ENCODE measurements at regions of chr19 and their contacts with region 1.

Region 1: DNA sequence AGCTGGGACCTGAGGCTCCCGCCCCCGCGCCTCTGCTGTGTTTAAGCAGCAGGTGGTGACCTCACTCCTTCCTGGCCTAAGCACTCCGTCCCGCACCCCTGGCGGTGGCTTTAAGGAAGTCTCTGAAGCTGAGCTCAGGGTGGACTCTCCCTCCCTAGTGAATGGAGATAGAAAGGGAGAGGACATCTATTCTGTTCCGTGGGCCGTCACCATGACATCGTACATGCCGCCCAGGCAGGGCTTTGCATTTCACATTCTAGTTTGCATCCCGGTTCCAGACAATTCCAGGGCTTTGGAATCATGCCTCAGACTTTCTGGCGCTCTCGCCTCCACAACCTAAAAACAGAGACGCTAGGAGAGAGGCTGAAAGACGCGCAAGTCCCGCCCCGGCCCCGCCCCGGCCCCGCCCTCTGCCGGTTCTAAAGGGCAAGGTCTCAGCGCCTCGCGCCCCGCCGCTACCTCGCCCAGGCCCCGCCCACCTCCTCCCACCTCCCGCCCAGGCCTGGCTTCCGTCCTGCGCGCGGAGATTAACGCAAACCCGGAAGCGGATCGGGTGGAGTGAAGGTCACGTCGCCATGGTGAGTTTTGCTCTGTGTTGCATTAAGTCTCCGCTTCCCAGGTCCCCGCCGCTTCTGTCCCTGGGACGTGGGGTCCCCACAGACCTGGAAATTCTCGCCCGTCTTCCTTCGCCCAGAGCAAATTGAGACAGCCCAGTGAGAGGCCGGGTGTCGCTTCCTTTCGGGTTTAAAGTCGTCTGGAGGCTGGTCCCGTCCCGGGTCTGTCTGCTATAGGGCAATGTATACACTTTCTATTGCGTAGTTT is at the start of gene ZNF808:
- DNase-seq: peak; percentile 87 to 99 (median 96)
- ATAC-seq: peak; percentile 93 to 97 (median 96)
- H3K4me3 ChIP-seq: peak within 1 kb of the TSS; percentile 93 to 97
- H3K4me3 Mint-ChIP-seq: peak within 1 kb of the TSS; percentile 95 to 98 (median 97)
- H3K27ac ChIP-seq: peak within 1 kb of the TSS; percentile 85
- H3K27ac Mint-ChIP-seq: peak within 1 kb of the TSS; percentile 97 to 99
- H3K4me1 ChIP-seq: peaks cover 3 to 26% of the 10 kb centered on the region in 2 experiments
- H3K4me1 Mint-ChIP-seq: peaks cover 27 to 38% (median 37%) of the 10 kb centered on the region in 3 donors
- H3K27me3 ChIP-seq: peaks cover 0 to under 1% of the 10 kb centered on the region in 2 experiments
- H3K27me3 Mint-ChIP-seq: no peaks in the 10 kb centered on the region
- total RNA-seq, gene ZNF808: 26.5 to 46.7 (median 41.3) TPM

Region 2: DNA sequence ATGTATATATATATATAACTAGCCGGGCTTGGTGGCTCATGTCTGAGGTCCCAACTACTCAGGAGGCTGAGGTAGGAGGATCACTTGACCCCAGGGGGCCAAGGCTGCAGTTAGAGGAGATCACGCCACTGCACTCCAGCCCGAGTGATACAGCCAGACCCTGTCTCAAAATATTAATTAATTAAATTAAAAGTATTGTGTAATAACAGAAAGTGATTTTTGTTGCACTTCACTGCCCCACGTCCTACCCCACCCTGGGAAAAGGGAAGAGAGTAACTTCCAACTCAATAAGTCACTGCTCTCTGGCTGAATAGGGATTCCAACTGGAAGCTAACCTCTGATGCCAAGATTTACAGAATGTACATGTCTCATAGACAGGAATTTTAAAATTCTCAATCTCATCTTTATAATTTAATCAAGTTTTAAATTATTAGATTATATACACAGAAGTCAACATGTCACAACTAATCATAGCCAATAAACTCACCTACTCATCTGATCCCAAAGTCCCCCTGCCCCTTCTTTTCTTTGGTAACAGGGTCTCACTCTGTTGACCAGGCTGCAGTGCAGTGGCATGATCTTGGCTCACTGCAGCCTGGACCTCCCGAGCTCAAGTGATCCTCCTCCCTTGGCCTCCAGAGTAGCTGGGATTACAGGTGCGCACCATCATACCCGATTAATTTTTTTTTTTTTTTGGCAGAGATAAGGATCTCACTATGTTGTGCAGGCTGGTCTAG is 160.5 kb after region 1 on chr19:
- CTCF ChIA-PET with region 1: interaction called in 1 of 2 experiments, 13 read pairs
- POLR2A ChIA-PET with region 1: no interaction called
- DNase-seq: no peak
- ATAC-seq: no peak
- H3K4me3 ChIP-seq: no peak overlapping the region
- H3K4me3 Mint-ChIP-seq: peak overlapping the region in 1 of 3 donors; percentile 0
- H3K27ac ChIP-seq: no peak overlapping the region
- H3K27ac Mint-ChIP-seq: no peak overlapping the region
- H3K4me1 ChIP-seq: peaks cover 11 to 26% of the 10 kb centered on the region in 2 experiments
- H3K4me1 Mint-ChIP-seq: peaks cover 37 to 45% (median 40%) of the 10 kb centered on the region in 3 donors
- H3K27me3 ChIP-seq: no peaks in the 10 kb centered on the region
- H3K27me3 Mint-ChIP-seq: no peaks in the 10 kb centered on the region

Measured in T-cell (primary cell).